Activated CD4-positive, alpha-beta memory T cell treated with anti-CD3 and anti-CD28 coated beads, Interleukin-2, amount 10 ng/mL, durations not matched to agents 7 days and 5 days (primary cell): ENCODE measurements at regions of chr5 and their contacts with region 1.

Region 1: GRCh38 chr5:101942321-101943215 is 353.5 kb downstream of the SLCO4C1 start:
- DNase-seq: no peak
- H3K4me3 Mint-ChIP-seq: no peak overlapping the region
- H3K27ac Mint-ChIP-seq: no peak overlapping the region
- H3K4me1 Mint-ChIP-seq: peaks cover 4% of the 10 kb centered on the region
- H3K27me3 Mint-ChIP-seq: no peaks in the 10 kb centered on the region

Region 2: DNA sequence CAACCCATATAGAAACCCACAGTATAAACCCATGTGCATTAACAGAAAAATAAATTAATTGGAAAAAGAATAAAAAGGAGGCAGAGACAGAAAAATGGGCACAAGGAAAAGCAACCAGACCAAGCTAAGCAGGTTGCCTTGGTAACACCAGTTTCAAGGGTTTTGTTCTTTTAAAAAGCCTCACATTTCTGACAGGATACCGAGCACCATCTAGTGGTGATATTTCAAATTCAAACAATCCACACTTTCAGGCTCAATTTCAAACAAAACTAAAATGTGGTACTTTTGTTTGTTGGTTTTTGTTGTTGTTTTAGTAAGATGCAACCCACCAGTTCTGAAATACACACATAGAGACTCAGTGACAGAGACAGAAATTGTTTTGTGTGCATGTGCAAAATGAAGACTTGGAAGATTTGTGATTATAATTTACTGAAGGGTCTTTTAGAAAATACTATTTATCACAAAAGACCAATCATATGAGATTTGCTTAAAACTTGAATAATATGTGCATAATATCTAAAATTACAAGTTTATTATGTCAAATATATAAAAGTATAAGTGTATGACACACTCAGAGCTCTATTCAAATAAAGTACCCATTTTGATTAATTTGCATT is 35.3 kb after region 1 on chr5:
- CTCF ChIA-PET with region 1: interaction called, 21 read pairs
- POLR2A ChIA-PET with region 1: no interaction called
- DNase-seq: no peak
- H3K4me3 Mint-ChIP-seq: no peak overlapping the region
- H3K27ac Mint-ChIP-seq: no peak overlapping the region
- H3K4me1 Mint-ChIP-seq: no peaks in the 10 kb centered on the region
- H3K27me3 Mint-ChIP-seq: no peaks in the 10 kb centered on the region

Region 3: DNA sequence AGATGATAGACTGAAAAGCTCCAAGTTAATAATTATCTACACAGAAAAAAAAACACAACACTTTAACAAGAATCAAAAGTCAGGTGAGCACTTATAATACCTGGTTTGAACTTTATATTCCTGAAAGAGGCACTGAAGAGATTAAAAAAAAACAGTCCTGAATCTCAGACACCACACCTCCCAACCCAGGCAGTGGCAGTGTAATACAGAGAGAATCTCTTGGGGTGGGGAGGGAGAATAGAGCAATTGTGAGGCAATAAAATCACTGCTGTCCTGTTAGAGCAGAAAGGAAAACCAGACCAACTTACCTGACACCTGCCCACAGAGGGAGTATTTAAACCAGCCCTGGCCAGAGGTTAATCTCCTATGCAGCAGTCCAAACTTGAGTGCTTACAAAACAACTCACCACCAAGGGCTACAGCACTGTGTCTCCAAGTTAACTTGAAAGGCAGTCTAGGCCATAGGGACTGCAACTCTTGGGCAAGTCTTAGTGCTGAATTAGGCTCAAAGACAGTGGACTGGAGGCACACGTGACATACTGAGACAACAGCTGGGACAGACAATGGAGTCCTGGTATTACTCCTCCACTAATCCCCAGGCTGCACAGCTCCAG is 299.3 kb after region 1 on chr5:
- CTCF ChIA-PET with region 1: no interaction called
- POLR2A ChIA-PET with region 1: no interaction called
- DNase-seq: no peak
- H3K4me3 Mint-ChIP-seq: no peak overlapping the region
- H3K27ac Mint-ChIP-seq: no peak overlapping the region
- H3K4me1 Mint-ChIP-seq: no peaks in the 10 kb centered on the region
- H3K27me3 Mint-ChIP-seq: no peaks in the 10 kb centered on the region